HCT116 (cell line): ENCODE measurements at regions of chr3 and their contacts with region 1.

Region 1: DNA sequence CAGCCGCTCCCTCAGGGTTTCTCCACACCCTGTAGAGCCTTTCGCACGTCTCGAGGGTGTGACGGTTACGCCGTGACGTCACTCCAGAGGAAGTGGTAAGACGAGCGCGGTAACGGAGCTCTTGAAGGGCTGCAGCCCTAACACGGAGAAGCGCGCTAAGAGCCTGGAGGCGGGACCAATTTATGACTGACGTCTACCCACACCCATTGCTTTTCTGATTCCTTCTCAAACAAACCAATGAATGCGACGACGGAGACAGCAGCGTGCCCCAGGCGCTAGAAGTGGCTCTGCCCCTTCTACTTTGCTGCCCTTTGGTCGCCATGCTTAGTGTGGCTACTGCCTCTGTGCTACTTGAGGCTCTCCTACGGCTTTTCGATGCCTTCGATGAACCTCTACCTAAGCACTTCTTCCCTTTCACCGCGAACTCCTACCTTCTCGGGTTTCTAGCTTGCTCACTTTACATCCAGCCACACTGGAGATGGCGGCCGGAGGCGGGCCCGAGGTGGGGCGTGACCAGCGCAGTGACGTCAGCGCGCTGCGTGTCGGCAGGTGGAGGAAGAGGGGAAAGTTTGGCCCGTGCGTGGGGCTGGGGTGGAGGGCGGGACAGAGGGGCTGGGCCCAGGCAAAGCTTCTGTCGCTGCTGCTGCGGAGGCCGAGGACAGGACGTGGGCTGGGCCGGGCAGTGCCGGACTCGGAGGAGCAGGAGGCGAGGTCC is at the start of gene OXSR1:
- DNase-seq: peak; percentile 100
- ATAC-seq: peak; percentile 89
- H3K4me3 ChIP-seq: peak within 1 kb of the TSS; percentile 88 to 92
- H3K27ac ChIP-seq: peak within 1 kb of the TSS; percentile 90
- H3K4me1 ChIP-seq: peaks cover 6 to 43% of the 10 kb centered on the region in 2 experiments; a peak in 3 of 4 replicates
- H3K27me3 ChIP-seq: no peaks in the 10 kb centered on the region
- CTCF ChIP-seq: no peak
- POLR2A ChIP-seq: peak; percentile 79
- RAD21 ChIP-seq: no peak
- total RNA-seq, gene OXSR1: 35.1 TPM

Region 2: DNA sequence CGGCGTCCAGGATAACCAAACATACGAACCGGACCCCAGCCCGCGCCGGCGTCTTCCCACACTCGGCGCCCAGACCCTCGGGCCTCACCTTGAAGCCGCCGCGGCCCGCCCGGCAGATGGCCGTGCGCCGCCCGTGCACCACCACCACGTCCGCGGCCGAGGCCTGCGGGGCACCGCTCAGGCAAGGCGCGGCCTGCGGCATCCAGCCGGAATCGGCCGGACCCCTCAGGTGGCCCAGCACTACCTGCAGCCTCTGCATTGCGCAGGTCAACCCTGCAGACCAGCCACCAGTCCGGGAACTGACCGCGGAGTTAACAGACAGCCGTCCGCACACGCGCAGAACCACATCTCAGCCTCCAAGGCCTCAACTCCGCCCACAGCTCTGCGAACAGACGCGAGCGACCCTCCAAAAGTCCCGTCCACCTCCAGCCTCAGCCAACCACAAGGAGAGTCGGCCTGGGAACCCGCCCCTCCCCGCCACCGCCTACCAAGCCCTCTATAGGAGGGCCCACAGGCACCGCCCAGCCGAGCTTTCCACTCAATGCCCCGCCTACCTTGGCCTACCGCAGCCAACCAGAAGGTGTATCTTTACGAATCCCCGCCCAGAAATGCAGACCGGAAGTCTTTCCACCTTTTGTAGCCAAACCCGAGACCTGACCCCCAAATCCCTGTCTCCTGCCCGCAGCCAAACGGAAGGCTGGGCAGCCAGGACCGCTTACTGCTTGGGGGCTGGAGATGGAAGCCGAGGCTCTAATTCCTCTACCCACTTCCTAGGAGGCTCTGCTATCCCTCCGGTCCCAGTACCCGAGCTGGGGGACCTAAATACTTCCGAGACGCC is 28.1 kb before region 1 on chr3 and contains the start of gene ACAA1:
- CTCF ChIA-PET with region 1: interaction called, 6 read pairs
- POLR2A ChIA-PET with region 1: interaction called, 19 read pairs
- RAD21 ChIA-PET with region 1: interaction called in 1 of 2 experiments, 3 read pairs
- intact Hi-C with region 1: loop called (anchors 2 kb)
- DNase-seq: peak; percentile 98
- ATAC-seq: peak; percentile 92
- H3K4me3 ChIP-seq: peak within 1 kb of the TSS; percentile 87 to 91
- H3K27ac ChIP-seq: peak within 1 kb of the TSS; percentile 75
- H3K4me1 ChIP-seq: peaks cover 36 to 70% of the 10 kb centered on the region in 2 experiments
- H3K27me3 ChIP-seq: no peaks in the 10 kb centered on the region
- CTCF ChIP-seq: no peak
- POLR2A ChIP-seq: peak; percentile 89
- RAD21 ChIP-seq: no peak
- total RNA-seq, gene ACAA1: 49.0 TPM

Region 3: DNA sequence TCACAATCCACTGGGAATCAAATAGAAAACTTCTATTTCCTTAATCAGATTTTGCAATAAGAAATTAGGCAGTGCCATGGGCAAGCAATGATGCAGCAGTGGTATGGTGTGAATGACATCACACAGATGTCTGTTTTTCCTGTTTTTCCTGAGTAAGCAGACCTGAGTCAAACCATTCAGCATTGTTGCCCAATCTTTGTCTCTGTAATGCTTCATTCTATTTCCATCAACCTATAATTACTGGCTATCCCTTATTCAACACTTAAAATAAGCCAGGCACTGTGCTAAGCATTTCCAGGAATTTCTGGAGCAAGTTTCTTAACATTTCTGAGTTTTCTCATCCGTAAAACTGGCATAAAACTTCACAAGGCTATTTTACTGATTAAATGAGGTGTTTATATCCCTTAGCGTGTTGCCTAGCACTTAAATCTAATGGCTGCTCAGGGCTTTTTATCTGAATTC is 11.1 kb before region 1 on chr3:
- CTCF ChIA-PET with region 1: interaction called, 10 read pairs
- POLR2A ChIA-PET with region 1: interaction called, 4 read pairs
- RAD21 ChIA-PET with region 1: no interaction called
- intact Hi-C with region 1: no loop called
- DNase-seq: no peak
- ATAC-seq: no peak
- H3K4me3 ChIP-seq: no peak overlapping the region
- H3K27ac ChIP-seq: no peak overlapping the region
- H3K4me1 ChIP-seq: peaks cover 6 to 27% of the 10 kb centered on the region in 2 experiments; a peak in 2 of 4 replicates
- H3K27me3 ChIP-seq: no peaks in the 10 kb centered on the region
- CTCF ChIP-seq: no peak
- POLR2A ChIP-seq: no peak
- RAD21 ChIP-seq: no peak

Region 4: DNA sequence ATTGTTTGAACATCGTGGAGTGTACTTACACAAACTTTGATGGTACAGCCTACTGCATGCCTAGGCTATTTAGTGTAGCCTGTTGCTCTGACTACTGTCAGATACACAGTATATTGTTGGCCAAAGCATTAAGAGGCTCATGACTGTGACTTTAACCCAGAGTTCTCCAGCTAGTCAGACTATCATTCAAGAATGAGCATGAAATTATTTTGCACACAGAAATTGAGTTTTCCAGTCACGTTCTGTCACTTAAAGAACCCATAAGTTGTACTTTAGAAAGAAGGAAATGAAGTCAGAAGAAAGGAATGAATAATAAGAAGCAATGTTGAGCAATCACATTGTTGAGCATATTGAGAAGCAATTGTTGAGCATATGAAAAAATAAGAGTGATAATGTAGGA is 62.9 kb after region 1 on chr3:
- CTCF ChIA-PET with region 1: no interaction called
- POLR2A ChIA-PET with region 1: no interaction called
- RAD21 ChIA-PET with region 1: no interaction called
- intact Hi-C with region 1: no loop called
- DNase-seq: no peak
- ATAC-seq: no peak
- H3K4me3 ChIP-seq: no peak overlapping the region
- H3K27ac ChIP-seq: no peak overlapping the region
- H3K4me1 ChIP-seq: peaks cover 0 to 4% of the 10 kb centered on the region in 2 experiments; a peak in 1 of 4 replicates
- H3K27me3 ChIP-seq: no peaks in the 10 kb centered on the region
- CTCF ChIP-seq: no peak
- POLR2A ChIP-seq: no peak
- RAD21 ChIP-seq: no peak